Right ventricle myocardium inferior (tissue), 1 donor: ENCODE measurements at regions of chr7 and their contacts with region 1.

Region 1: GRCh38 chr7:139075031-139075652 is 34.4 kb downstream of the ZC3HAV1 start:
- DNase-seq: peak; percentile 76
- ATAC-seq: peak; percentile 87

Region 2: GRCh38 chr7:138880881-138881578 is 194.1 kb before region 1 on chr7:
- intact Hi-C with region 1: loop called (anchors 5 kb)
- DNase-seq: no peak
- ATAC-seq: peak; percentile 58

Region 3: DNA sequence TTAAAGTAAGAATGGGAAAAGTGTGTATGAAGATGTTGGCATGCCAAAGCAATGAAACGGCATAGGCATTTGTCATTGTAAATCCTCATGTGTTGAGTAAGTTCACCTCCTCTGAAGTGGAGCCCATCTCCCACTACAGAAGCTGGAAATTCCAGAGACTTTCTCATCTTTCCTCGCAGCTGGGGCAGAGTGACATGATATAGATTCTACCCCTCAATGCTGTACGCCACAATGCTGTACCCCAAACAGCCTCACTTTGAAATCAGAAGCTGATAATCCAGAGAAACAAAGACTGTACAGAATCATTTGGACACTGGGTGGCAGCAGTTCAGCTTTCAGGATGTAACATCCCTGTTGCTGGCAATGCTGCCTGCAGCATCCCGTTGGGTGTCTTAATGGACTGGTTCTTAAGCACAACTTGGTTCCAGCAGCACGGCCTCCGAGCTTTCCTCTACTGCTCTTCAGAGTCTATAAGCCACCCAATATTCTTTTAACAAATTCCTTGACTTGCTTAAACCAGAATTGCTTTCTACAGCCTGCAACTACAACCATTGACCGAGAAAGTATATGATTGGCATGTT is 58.1 kb before region 1 on chr7:
- intact Hi-C with region 1: loop called (anchors 1 kb)
- DNase-seq: no peak
- ATAC-seq: peak; percentile 57

Region 4: GRCh38 chr7:139035586-139036353 is 39.4 kb before region 1 on chr7 and contains the start of gene ZC3HAV1L:
- intact Hi-C with region 1: loop called (anchors 5 kb)
- DNase-seq: peak; percentile 77
- ATAC-seq: peak; percentile 96
- total RNA-seq, gene ZC3HAV1L: 4.0 TPM

Region 5: DNA sequence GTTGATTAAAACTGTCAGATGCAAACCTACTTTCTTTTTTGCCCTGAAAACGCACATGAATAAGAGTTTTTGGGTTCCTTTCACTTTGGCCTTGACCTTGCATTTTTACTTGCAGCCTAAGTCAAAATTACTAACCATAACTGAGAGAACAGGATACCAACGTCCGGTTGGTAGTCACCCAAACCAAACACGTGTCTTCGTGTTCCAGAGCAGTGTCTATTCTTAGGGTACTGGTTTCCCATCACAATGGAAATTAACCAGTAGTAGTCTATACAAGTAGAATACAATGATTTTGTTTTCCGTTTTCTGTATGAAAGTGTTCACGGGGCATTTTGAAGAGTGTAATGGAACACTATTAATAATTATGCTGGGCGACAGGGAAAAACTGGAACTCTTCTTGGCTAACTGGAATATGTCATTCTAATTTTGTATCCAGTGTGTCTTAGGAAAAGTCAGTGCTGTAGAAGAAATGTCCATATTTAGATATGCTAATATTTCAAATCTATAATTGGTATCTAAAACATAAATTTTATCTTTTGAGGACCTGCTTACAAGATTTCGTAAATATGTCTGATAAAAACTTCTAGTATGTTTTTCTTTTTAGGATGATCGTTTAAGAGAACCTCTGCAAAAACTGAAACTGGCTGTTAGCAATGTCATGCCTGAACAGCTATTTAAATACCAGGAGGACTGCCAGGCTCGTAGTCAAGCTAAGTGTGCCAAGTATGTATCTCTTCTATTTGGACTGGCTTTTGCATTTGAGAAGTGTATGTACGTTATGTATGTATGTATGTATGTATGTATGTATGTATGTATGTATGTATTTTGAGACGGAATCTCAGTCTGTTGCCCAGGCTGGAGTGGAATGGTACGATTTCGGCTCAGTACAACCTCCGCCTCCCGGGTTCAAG is 196.8 kb after region 1 on chr7:
- intact Hi-C with region 1: no loop called
- DNase-seq: no peak
- ATAC-seq: peak; percentile 68

Region 6: DNA sequence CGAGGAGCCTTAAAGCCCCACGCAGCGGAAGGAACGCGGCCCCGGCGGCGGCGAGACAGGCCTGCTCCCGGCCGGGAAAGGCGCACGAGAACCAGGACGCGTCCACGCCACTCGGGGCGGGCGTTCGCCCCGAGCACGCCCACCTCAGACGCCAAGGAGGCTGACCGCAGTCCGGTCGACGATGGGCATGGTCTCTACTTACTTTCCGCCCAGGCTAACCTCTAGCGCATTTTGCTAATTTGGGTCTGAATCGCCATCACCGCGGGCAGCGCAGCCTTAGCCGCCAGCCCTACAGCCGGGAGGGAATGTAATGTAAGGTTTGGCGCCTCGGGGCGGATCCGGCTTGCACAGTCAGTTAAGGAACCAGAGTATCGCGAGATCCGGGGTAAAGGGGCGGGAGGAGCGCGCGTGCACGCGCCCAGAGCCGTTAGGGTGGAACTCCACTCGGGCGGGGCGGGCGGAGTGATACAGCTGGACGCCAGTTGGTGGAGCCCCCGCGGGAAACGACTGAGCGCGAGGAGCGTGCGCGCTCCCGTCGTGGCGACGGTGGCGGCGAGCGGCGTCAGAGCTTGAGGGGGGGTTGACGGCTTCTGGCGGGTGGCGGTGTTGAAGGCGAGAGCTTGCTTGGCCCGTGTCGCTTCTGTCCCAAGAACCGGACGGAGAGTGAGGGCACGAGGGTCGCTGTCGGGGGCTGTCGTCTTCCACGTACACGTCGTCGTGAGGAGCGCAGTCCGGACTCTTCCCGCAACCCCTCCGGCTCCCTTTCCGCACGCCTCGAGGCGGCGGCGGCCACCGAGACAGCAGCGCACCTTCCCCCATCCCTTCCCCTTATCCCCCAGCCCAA is 284.4 kb after region 1 on chr7 and contains the start of gene LUC7L2:
- intact Hi-C with region 1: no loop called
- DNase-seq: peak; percentile 100
- ATAC-seq: peak; percentile 97
- total RNA-seq, gene LUC7L2: 44.9 TPM

Region 7: GRCh38 chr7:139416405-139416804 is 341.3 kb after region 1 on chr7:
- intact Hi-C with region 1: no loop called
- DNase-seq: no peak
- ATAC-seq: no peak